SK-N-SH (cell line): ENCODE measurements at regions of chr12 and their contacts with region 1.

Region 1: DNA sequence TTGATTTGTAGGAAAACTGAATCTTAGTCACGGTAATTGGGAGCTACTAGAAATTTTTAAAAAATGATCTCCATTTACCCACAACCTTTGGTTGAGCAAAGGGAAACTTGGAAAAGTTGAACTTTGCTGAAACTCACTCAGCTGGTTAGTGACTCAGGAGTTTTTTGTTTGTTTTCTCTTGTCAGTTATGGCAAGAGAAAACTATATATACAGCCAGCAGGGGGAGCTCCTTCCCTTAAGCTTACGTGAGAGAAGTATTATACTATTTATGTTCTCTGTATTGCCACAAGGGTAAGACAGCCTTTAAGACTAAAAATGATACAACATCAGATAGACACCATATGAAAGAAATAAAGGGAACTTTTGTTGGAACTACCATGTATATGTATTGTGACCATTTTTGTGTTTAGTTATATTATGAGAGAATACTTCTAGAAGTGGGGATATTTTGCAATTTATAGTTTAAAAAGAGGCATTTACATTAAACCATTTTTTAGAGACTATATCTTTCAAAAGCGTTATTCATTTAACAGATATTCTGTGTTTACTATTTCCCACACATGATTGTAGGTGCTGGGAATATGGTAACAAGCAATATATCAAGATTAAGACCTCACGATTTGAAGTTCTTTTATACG is 28.1 kb upstream of the TBC1D30 start:
- DNase-seq: peak; percentile 52
- H3K4me3 ChIP-seq: peak overlapping the region in 1 of 2 experiments; percentile 5; a peak in 1 of 4 replicates
- H3K27ac ChIP-seq: no peak overlapping the region
- H3K4me1 ChIP-seq: no peaks in the 10 kb centered on the region
- H3K27me3 ChIP-seq: peaks cover 17% of the 10 kb centered on the region; the same call in 1 of the 2 replicates
- CTCF ChIP-seq: peak; percentile 91
- EP300 ChIP-seq: no peak
- RAD21 ChIP-seq: peak; percentile 68

Region 2: DNA sequence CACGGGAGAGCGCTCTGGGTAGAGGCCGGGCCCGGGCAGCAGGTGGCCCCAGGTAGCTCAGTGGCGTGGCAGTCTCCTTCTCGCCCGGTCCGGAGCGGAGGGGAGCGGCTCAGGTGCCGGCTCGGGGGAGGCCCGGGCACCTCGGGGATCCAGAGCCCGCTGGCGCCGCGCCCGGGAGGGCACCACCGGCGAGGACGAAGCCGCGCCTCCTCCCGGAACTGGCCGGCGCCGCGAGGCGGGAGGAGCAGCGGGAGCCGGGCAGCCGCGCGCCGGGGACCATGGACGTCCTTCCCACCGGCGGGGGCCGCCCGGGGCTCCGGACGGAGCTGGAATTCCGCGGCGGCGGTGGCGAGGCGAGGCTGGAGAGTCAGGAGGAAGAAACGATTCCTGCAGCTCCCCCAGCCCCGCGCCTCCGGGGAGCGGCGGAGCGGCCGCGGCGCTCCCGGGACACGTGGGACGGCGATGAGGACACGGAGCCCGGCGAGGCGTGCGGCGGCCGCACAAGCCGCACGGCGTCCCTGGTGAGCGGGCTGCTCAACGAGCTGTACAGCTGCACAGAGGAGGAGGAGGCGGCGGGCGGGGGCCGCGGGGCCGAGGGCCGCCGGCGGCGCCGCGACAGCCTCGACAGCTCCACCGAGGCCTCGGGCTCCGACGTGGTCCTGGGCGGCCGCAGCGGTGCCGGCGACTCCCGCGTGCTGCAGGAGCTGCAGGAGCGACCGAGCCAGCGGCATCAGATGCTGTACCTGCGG is 15.6 kb before region 1 on chr12:
- CTCF ChIA-PET with region 1: interaction called, 38 read pairs
- POLR2A ChIA-PET with region 1: no interaction called
- DNase-seq: peak; percentile 81
- H3K4me3 ChIP-seq: peak overlapping the region in 1 of 2 experiments; percentile 41; a peak in 3 of 4 replicates
- H3K27ac ChIP-seq: no peak overlapping the region
- H3K4me1 ChIP-seq: peaks cover 0 to 7% of the 10 kb centered on the region in 2 experiments; a peak in 1 of 4 replicates
- H3K27me3 ChIP-seq: peaks cover 55% of the 10 kb centered on the region
- CTCF ChIP-seq: no peak
- EP300 ChIP-seq: no peak
- RAD21 ChIP-seq: no peak

Region 3: DNA sequence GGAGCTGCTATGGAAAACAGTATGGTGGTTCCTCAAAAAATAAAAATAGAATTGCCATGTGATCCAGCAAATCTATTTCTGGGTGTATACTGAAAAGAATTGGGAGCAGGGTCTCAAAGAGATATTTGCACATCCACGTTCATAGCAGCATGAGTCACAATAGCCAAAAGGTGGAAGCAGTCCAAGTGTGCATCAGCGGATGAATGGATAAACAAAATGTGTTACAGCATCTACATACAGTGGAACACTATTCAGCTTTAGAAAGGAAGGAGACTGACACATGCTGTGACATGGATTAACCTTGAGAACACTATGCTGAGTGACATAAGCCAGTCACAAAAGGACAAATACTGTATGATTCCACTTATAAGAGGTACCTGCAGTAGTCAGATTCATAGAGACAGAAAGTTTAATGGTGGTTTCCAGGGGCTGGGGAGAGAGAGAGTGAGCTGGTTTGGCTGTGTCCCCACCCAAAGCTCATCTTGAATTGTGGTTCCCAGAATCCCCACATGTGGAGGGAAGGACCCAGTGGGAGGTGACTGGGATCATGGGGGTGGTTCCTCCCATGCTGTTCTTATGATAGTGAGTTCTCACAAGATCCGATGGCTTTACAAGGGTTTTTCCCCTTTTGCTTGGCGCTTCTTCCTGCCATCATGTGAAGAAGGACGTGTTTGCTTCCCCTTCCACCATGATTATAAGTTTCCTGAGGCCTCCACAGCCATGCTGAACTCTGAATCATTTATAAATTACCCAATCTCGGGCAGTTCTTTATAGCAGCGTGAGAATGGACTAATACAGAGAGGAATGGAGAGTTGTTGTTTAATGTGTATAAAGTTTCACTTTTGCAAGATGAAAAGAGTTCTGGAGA is 10.5 kb after region 1 on chr12:
- CTCF ChIA-PET with region 1: interaction called, 21 read pairs
- POLR2A ChIA-PET with region 1: no interaction called
- DNase-seq: no peak
- H3K4me3 ChIP-seq: no peak overlapping the region
- H3K27ac ChIP-seq: no peak overlapping the region
- H3K4me1 ChIP-seq: no peaks in the 10 kb centered on the region
- H3K27me3 ChIP-seq: peaks cover 10% of the 10 kb centered on the region; the same call in 1 of the 2 replicates
- CTCF ChIP-seq: no peak
- EP300 ChIP-seq: no peak
- RAD21 ChIP-seq: no peak

Region 4: GRCh38 chr12:65106948-65107347 is 310.6 kb after region 1 on chr12:
- CTCF ChIA-PET with region 1: interaction called, 11 read pairs
- POLR2A ChIA-PET with region 1: no interaction called
- DNase-seq: no peak
- H3K4me3 ChIP-seq: no peak overlapping the region; a peak in 1 of 4 replicates
- H3K27ac ChIP-seq: no peak overlapping the region
- H3K4me1 ChIP-seq: no peaks in the 10 kb centered on the region
- H3K27me3 ChIP-seq: peaks cover 14% of the 10 kb centered on the region; the same call in 1 of the 2 replicates
- CTCF ChIP-seq: peak; percentile 57
- EP300 ChIP-seq: no peak
- RAD21 ChIP-seq: no peak

Region 5: GRCh38 chr12:65121049-65121955 is 325.0 kb after region 1 on chr12 and contains the start of gene WIF1:
- CTCF ChIA-PET with region 1: interaction called, 13 read pairs
- POLR2A ChIA-PET with region 1: no interaction called
- DNase-seq: peak; percentile 69
- H3K4me3 ChIP-seq: peak within 1 kb of the TSS; percentile 14 to 37; a peak in 3 of 4 replicates
- H3K27ac ChIP-seq: no peak within 1 kb of the TSS
- H3K4me1 ChIP-seq: no peaks in the 10 kb centered on the region; a peak in 1 of 4 replicates
- H3K27me3 ChIP-seq: peaks cover 68% of the 10 kb centered on the region
- CTCF ChIP-seq: peak; percentile 56
- EP300 ChIP-seq: no peak
- RAD21 ChIP-seq: no peak
- polyA plus RNA-seq, gene WIF1: not detected in 2 replicates